ENCODE measurements at regions of chr14 and their contacts with region 1.

Region 1: GRCh38 chr14:80213599-80213998 is 2.3 kb upstream of the DIO2 start:
- DNase-seq: no peak

Region 2: DNA sequence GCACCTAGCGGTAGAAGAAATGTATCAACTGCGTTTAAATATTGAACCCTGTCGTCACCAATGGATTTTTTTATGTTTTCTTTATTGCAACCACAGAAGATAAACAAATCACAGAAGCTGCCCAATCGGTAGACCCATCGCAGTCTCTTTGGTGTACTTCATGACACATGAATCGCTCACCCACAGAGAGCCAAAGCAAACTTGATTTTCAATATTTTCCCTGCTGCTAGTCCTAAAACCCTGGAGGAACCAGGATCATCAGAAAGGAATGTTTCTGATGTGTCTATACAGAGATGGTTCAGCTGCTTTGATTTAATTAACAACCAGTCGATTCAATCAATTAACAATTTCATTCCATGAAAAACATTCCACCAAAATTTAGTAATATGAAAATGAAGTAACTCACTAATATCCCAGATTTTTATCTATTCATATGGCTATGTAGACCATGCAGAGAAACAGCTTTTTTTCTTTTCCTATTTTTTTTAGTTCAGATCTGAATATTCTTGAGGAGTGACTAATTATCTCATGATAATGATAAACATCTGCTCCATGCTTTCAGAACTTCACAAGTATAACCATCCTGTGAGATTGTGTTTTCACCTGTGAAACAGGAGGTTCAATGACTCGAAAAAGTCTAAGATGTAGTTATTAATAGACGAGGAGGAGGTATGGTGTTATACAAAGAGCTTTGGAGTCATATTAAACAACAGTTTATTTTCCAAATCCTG is 48.4 kb before region 1 on chr14:
- intact Hi-C with region 1: loop called (anchors 10 kb)
- DNase-seq: no peak

Region 3: DNA sequence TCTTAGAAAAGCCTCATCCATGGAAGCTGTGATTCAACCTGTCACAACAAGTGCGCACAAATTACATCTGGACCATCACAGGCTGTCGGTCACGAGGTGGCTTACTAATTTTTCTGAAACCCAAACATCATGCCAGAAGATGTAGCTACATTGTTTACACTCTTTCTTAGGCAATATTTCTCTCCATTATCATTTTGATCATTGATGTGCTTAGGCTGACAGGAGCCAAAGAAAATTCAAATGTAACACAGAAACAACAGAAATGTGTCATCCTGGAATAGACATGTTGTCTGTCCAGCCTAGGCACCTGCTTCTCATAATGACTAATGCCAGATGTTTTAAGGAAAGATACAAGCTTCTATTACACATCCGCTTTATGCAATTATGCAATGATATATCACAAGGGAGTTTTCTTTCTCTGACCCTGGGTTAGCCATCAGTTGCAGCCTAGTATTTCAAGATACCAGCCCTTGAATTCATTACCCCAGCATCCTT is 90.7 kb after region 1 on chr14:
- intact Hi-C with region 1: loop called (anchors 10 kb)
- DNase-seq: no peak